ENCODE measurements at regions of chr4 and their contacts with region 1.

Region 1: DNA sequence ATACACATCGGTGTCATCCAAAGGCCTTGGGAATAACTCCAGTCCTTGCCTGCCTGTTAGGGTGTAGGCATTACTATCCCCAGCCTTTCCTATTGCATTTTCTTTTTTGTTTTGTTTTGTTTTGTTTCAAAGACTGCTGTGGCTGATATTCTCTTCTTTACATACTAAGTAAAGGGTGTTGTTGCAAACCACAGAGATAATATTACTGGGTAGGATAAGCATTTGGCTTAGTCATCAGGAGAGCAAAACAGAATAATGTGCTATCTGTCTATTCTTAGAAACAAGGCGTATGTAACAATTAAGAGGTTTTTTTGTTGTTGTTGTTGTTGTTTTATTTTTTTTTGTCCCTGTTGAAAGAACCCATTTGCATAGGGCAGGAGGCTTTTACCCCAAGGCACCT is 41.8 kb downstream of the UGT2B28 start:
- DNase-seq: no peak
- H3K4me3 ChIP-seq: no peak overlapping the region
- H3K27ac ChIP-seq: no peak overlapping the region
- H3K4me1 ChIP-seq: no peaks in the 10 kb centered on the region
- H3K27me3 ChIP-seq: no peaks in the 10 kb centered on the region
- CTCF ChIP-seq: no peak
- POLR2A ChIP-seq: no peak

Region 2: GRCh38 chr4:69617083-69617694 is 295.1 kb after region 1 on chr4:
- intact Hi-C with region 1: loop called (anchors 10 kb)
- DNase-seq: peak in 2 of 7 donors; percentile 19 to 27
- H3K4me3 ChIP-seq: no peak overlapping the region
- H3K27ac ChIP-seq: no peak overlapping the region
- H3K4me1 ChIP-seq: no peaks in the 10 kb centered on the region
- H3K27me3 ChIP-seq: no peaks in the 10 kb centered on the region
- CTCF ChIP-seq: peak; percentile 28 to 53 (median 42)
- POLR2A ChIP-seq: no peak

Measured in adrenal gland (tissue), 19 donors.